IMR-90 (cell line): ENCODE measurements at regions of chr16 and their contacts with region 1.

Region 1: GRCh38 chr16:81403616-81404373 is 40.8 kb upstream of the CMIP start:
- DNase-seq: peak; percentile 53
- ATAC-seq: peak; percentile 84
- H3K4me3 ChIP-seq: no peak overlapping the region
- H3K27ac ChIP-seq: no peak overlapping the region
- H3K4me1 ChIP-seq: peaks cover 2% of the 10 kb centered on the region; the same call in 1 of the 2 replicates
- H3K27me3 ChIP-seq: no peaks in the 10 kb centered on the region
- CTCF ChIP-seq: peak; percentile 95
- POLR2A ChIP-seq: peak; percentile 53; the same call in 1 of the 2 replicates
- RAD21 ChIP-seq: peak; percentile 98

Region 2: GRCh38 chr16:81481207-81481821 is 77.5 kb after region 1 on chr16:
- CTCF ChIA-PET with region 1: no interaction called
- POLR2A ChIA-PET with region 1: no interaction called
- dilution Hi-C with region 1: no loop called
- in situ Hi-C with region 1: no loop called
- intact Hi-C with region 1: no loop called
- DNase-seq: peak; percentile 22
- ATAC-seq: no peak; the same call in 1 of the 2 replicates
- H3K4me3 ChIP-seq: no peak overlapping the region
- H3K27ac ChIP-seq: no peak overlapping the region
- H3K4me1 ChIP-seq: peaks cover 22% of the 10 kb centered on the region
- H3K27me3 ChIP-seq: no peaks in the 10 kb centered on the region
- CTCF ChIP-seq: no peak
- POLR2A ChIP-seq: no peak
- RAD21 ChIP-seq: no peak

Region 3: DNA sequence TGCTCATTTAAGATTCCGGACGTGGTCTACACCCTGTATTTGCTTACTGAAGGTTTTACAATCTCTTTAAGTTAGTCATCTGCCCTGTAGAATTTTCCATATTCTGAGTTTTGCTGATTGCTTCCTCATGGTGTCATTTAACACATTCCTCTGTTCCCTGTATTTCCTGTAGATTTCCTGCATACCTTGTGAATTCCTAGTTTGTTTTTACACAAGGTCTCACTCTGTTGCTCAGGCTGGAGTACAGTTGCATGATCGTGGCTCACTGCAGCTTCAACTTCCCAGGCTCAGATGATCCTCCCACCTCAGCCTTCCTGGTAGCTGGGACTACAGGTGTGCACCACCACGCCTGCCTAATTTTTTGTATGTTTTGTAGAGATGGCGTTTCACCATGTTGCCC is 107.6 kb after region 1 on chr16:
- CTCF ChIA-PET with region 1: no interaction called
- POLR2A ChIA-PET with region 1: no interaction called
- dilution Hi-C with region 1: no loop called
- in situ Hi-C with region 1: no loop called
- intact Hi-C with region 1: loop called (anchors 1 kb)
- DNase-seq: peak; percentile 89
- ATAC-seq: peak; percentile 88
- H3K4me3 ChIP-seq: no peak overlapping the region
- H3K27ac ChIP-seq: peak overlapping the region; percentile 48; the same call in 1 of the 2 replicates
- H3K4me1 ChIP-seq: peaks cover 12% of the 10 kb centered on the region
- H3K27me3 ChIP-seq: no peaks in the 10 kb centered on the region
- CTCF ChIP-seq: no peak
- POLR2A ChIP-seq: no peak
- RAD21 ChIP-seq: no peak

Region 4: DNA sequence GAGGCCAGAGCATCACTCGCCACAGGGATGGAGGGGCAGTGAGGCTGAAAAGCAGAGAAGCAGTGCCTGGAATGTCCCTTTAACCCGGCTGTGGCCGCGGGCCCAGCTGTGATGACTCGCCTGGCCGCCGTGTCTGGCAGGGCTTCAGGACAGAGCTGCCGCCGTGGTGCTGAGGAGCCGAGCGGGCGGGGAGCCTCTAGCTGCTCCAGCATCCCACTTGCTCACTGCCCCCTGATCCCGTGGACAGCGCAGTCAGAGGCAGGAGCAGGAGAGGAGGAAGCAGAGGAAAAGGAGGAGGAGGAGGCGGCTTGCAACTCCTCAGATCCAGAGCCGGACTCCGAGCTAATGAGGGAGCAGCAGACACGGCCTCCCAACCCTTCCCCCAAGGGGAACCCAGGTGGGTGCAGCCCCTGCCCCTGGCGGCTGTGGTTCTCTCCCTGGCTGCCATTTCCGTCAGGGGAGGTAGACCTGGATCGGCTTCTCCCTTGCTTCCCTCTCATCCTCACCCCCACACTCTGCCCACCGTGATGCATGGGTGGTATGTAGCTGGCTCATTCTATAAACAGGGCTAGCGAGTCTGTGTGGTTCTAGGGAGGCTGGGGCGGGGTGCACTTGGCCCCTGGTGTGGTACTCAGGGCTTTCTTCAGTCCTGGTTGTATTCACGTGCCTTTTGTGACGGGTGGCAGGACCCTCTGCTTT is 206.5 kb after region 1 on chr16:
- CTCF ChIA-PET with region 1: interaction called, 3 read pairs
- POLR2A ChIA-PET with region 1: no interaction called
- dilution Hi-C with region 1: no loop called
- in situ Hi-C with region 1: no loop called
- intact Hi-C with region 1: loop called (anchors 5 kb)
- DNase-seq: peak; percentile 84
- ATAC-seq: peak; percentile 93
- H3K4me3 ChIP-seq: no peak overlapping the region
- H3K27ac ChIP-seq: no peak overlapping the region
- H3K4me1 ChIP-seq: peaks cover 11% of the 10 kb centered on the region
- H3K27me3 ChIP-seq: no peaks in the 10 kb centered on the region
- CTCF ChIP-seq: no peak
- POLR2A ChIP-seq: no peak
- RAD21 ChIP-seq: peak; percentile 20; the same call in 1 of the 2 replicates

Region 5: GRCh38 chr16:81696961-81697615 is 293.3 kb after region 1 on chr16:
- CTCF ChIA-PET with region 1: interaction called, 4 read pairs
- POLR2A ChIA-PET with region 1: no interaction called
- dilution Hi-C with region 1: no loop called
- in situ Hi-C with region 1: no loop called
- intact Hi-C with region 1: loop called (anchors 1 kb)
- DNase-seq: peak; percentile 54
- ATAC-seq: peak; percentile 40
- H3K4me3 ChIP-seq: no peak overlapping the region
- H3K27ac ChIP-seq: no peak overlapping the region
- H3K4me1 ChIP-seq: peaks cover 20% of the 10 kb centered on the region
- H3K27me3 ChIP-seq: no peaks in the 10 kb centered on the region
- CTCF ChIP-seq: peak; percentile 75
- POLR2A ChIP-seq: no peak
- RAD21 ChIP-seq: peak; percentile 76

Region 6: GRCh38 chr16:81730090-81731051 is 326.6 kb after region 1 on chr16:
- CTCF ChIA-PET with region 1: no interaction called
- POLR2A ChIA-PET with region 1: no interaction called
- dilution Hi-C with region 1: no loop called
- in situ Hi-C with region 1: loop called (anchors 5 kb)
- intact Hi-C with region 1: no loop called
- DNase-seq: peak; percentile 72
- ATAC-seq: peak; percentile 96
- H3K4me3 ChIP-seq: peak overlapping the region; percentile 34
- H3K27ac ChIP-seq: no peak overlapping the region
- H3K4me1 ChIP-seq: peaks cover 7% of the 10 kb centered on the region; the same call in 1 of the 2 replicates
- H3K27me3 ChIP-seq: peaks cover 10% of the 10 kb centered on the region
- CTCF ChIP-seq: peak; percentile 36
- POLR2A ChIP-seq: no peak
- RAD21 ChIP-seq: no peak